ENCODE measurements at regions of chr6 and their contacts with region 1.

Region 1: DNA sequence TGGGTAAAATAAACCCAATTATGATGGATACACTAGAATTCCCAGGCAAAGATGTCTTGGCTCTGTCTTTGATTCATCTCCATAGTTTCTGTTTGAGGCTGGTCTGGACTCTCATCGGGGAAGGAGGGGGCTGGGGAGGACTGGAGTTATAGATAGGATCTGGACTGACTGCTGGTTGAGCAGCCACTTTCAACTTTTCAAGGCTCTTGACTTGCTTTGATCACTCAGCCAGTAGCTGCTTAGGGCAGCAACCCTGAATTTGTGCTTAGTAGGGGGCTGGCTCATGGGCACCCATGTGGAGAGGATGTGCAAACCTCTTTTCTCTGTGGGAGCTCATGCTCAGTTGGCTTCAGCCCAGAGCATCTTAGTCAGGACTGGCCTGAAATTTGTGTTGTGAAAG is 114.0 kb upstream of the NEDD9 start:
- DNase-seq: peak; percentile 71
- ATAC-seq: peak; percentile 87
- H3K4me3 ChIP-seq: no peak overlapping the region
- H3K27ac ChIP-seq: peak overlapping the region; percentile 65
- H3K4me1 ChIP-seq: peaks cover 39% of the 10 kb centered on the region
- H3K27me3 ChIP-seq: no peaks in the 10 kb centered on the region
- CTCF ChIP-seq: no peak
- EP300 ChIP-seq: peak in 1 of 2 experiments; percentile 22; a peak in 1 of 4 replicates
- POLR2A ChIP-seq: no peak
- RAD21 ChIP-seq: no peak

Region 2: GRCh38 chr6:11064836-11065235 is 281.7 kb before region 1 on chr6:
- CTCF ChIA-PET with region 1: no interaction called
- POLR2A ChIA-PET with region 1: no interaction called
- RAD21 ChIA-PET with region 1: no interaction called
- SMC1A ChIA-PET with region 1: no interaction called
- in situ Hi-C with region 1: no loop called
- intact Hi-C with region 1: no loop called
- DNase-seq: no peak
- ATAC-seq: no peak
- H3K4me3 ChIP-seq: no peak overlapping the region
- H3K27ac ChIP-seq: no peak overlapping the region
- H3K4me1 ChIP-seq: no peaks in the 10 kb centered on the region
- H3K27me3 ChIP-seq: no peaks in the 10 kb centered on the region
- CTCF ChIP-seq: no peak
- EP300 ChIP-seq: no peak
- POLR2A ChIP-seq: no peak
- RAD21 ChIP-seq: no peak

Region 3: DNA sequence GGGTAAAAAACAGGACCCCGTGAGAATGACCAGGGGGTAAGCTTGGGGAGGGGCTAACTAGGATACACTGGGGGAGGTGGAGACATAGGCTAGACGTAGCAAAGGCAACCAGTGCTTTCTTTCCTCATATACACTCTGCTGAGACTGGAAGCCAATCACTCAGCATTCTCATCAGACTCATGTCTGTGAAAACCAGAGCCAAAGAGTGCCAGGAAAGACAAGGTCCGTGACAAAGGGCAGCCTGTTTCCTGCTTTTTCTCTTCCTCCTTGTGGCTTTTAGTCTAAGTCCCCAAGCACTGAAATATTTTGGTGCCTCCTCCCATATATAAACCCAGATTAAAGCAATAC is 16.1 kb before region 1 on chr6:
- CTCF ChIA-PET with region 1: interaction called, 6 read pairs
- POLR2A ChIA-PET with region 1: interaction called, 22 read pairs
- RAD21 ChIA-PET with region 1: interaction called, 10 read pairs
- SMC1A ChIA-PET with region 1: interaction called, 66 read pairs
- in situ Hi-C with region 1: no loop called
- intact Hi-C with region 1: no loop called
- DNase-seq: no peak
- ATAC-seq: peak; percentile 35; the same call in 2 of the 3 replicates
- H3K4me3 ChIP-seq: no peak overlapping the region
- H3K27ac ChIP-seq: peak overlapping the region; percentile 58
- H3K4me1 ChIP-seq: peaks cover 35% of the 10 kb centered on the region
- H3K27me3 ChIP-seq: no peaks in the 10 kb centered on the region
- CTCF ChIP-seq: no peak
- EP300 ChIP-seq: no peak
- POLR2A ChIP-seq: no peak
- RAD21 ChIP-seq: no peak

Region 4: GRCh38 chr6:11358904-11359830 is 12.7 kb after region 1 on chr6:
- CTCF ChIA-PET with region 1: interaction called, 9 read pairs
- POLR2A ChIA-PET with region 1: interaction called, 7 read pairs
- RAD21 ChIA-PET with region 1: interaction called, 114 read pairs
- SMC1A ChIA-PET with region 1: interaction called, 59 read pairs
- in situ Hi-C with region 1: no loop called
- intact Hi-C with region 1: no loop called
- DNase-seq: no peak
- ATAC-seq: no peak
- H3K4me3 ChIP-seq: no peak overlapping the region
- H3K27ac ChIP-seq: no peak overlapping the region
- H3K4me1 ChIP-seq: peaks cover 24% of the 10 kb centered on the region
- H3K27me3 ChIP-seq: no peaks in the 10 kb centered on the region
- CTCF ChIP-seq: no peak
- EP300 ChIP-seq: no peak
- POLR2A ChIP-seq: no peak
- RAD21 ChIP-seq: no peak

Region 5: DNA sequence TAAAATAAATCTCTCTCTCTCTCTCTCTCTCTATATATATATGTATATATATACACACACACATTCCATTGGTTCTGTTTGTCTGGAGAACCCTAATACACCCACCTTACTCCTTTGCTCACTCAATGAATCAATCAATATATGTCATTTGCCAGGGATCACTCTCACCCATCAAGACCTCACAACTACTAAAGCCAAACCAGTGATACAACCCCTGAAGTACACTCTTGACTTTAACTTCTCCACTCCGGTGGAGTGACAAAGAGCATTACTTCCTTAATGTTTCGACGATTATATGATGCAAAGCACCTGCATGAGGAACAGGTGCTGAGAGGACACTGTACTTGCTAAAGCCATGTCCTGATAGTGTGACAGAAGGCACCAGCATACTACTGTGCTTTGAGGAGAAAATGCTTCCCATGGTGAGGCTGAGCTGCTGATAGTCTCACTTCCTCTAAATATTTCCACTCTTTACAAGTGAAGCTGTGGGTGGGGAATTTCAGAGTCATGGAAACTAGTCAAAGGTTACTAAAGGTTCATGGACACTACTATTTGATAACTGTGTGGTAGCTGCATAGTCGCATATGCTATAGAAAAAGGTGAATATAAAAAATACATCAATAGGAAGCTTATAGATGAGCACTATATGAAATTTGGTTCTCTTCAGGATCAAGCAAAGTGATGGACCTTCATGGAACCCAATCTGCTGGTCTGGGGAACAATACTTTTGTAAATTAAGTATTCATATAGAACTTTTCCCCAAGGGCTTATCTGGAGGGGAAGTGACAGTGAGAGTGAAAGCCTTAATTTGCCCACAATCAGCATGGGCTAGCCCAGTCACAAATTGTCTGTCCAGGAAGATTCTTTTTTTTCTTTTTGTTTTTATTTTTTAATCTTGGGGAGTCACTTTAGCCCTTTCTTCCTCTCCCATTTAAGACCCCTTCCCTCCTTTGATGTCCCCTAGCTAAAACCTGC is 27.8 kb after region 1 on chr6:
- CTCF ChIA-PET with region 1: interaction called, 4 read pairs
- POLR2A ChIA-PET with region 1: interaction called, 5 read pairs
- RAD21 ChIA-PET with region 1: interaction called, 29 read pairs
- SMC1A ChIA-PET with region 1: interaction called, 21 read pairs
- in situ Hi-C with region 1: no loop called
- intact Hi-C with region 1: no loop called
- DNase-seq: peak; percentile 96
- ATAC-seq: peak; percentile 85
- H3K4me3 ChIP-seq: 0 out of 2 replicates have a peak overlapping the region, but pooled peaks have one; percentile 44
- H3K27ac ChIP-seq: peak overlapping the region; percentile 89
- H3K4me1 ChIP-seq: peaks cover 44% of the 10 kb centered on the region
- H3K27me3 ChIP-seq: no peaks in the 10 kb centered on the region
- CTCF ChIP-seq: no peak
- EP300 ChIP-seq: peak; percentile 83 to 95
- POLR2A ChIP-seq: peak; percentile 43; the same call in 1 of the 2 replicates
- RAD21 ChIP-seq: peak; percentile 25

Region 6: GRCh38 chr6:11537229-11538051 is 190.9 kb after region 1 on chr6 and contains the start of gene TMEM170B:
- CTCF ChIA-PET with region 1: no interaction called
- POLR2A ChIA-PET with region 1: no interaction called
- RAD21 ChIA-PET with region 1: no interaction called
- SMC1A ChIA-PET with region 1: no interaction called
- in situ Hi-C with region 1: no loop called
- intact Hi-C with region 1: no loop called
- DNase-seq: peak; percentile 82
- ATAC-seq: peak; percentile 98
- H3K4me3 ChIP-seq: peak within 1 kb of the TSS; percentile 96
- H3K27ac ChIP-seq: peak within 1 kb of the TSS; percentile 69
- H3K4me1 ChIP-seq: no peaks in the 10 kb centered on the region; the same call in 1 of the 2 replicates
- H3K27me3 ChIP-seq: no peaks in the 10 kb centered on the region
- CTCF ChIP-seq: no peak
- EP300 ChIP-seq: 0 out of 4 replicates have a peak, but pooled peaks of 1 of the 2 experiments have one; percentile 5
- POLR2A ChIP-seq: peak; percentile 78
- RAD21 ChIP-seq: no peak
- polyA plus RNA-seq, gene TMEM170B: 1.6 to 1.8 TPM

Measured in GM12878 (cell line).